ENCODE measurements at regions of chr1 and their contacts with region 1.

Region 1: DNA sequence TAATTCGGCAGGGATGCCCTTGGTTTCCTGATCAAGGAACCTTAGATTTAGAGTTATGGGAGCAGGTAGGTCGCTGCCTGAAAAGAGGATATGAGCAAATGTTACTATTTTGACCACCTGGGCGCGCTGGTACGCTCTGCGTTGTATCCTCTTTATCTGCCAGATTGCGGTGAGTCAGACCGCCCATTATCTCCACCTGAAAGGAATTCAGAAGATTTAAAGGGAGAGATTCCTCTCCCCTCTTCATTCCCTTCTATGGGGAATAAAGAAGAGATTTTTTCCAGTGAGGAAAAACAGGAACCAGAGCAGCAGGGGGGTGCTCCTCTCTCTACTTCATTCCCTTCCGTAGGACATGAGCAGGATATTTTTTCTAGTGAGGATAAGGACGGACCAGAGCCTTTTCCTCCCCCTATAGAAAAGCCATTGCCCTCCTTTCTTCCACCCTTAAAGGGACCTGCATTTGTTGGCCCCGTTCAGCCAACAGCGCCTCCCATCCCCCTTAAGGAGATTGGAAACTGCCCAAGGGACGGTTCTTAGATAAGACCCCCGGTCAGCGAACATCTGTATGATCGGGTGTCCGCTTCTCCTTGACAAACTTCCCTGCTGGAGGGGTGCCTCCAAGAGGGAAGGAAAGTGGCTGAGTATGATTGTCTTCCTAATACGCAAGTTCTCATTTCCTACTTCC is 34.1 kb downstream of the CLCA1 start:
- DNase-seq: peak; percentile 30
- H3K27ac ChIP-seq: no peak overlapping the region
- CTCF ChIP-seq: no peak

Region 2: DNA sequence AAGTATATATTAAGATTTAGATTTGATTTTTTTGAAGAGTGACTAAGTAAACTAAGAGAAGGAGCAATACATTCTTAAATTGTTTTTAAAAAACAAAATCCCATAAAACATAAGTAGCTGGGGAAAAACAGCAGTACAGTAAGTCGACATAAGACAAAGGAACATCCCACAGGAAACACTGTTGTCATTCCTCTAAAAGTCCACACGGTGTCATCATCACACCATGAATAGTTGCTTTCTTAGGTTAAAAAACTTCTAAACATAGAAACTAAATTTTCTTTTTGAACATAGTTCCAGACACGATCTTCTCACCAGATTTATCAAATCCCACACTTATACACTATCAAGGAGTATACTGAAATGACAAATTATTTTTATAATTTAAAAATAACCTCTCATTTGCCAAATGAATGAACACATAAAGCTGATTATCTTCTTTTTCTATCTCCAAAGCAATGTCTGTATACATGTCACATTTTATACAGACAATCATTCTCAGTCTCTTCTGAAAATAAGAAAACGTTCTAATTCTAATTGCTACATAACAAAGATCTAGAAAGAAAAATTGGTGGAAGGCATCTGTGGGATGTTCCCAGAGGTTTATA is 122.5 kb before region 1 on chr1:
- CTCF ChIA-PET with region 1: interaction called, 14 read pairs
- POLR2A ChIA-PET with region 1: no interaction called
- DNase-seq: peak; percentile 57
- H3K27ac ChIP-seq: no peak overlapping the region
- CTCF ChIP-seq: peak; percentile 76

Region 3: DNA sequence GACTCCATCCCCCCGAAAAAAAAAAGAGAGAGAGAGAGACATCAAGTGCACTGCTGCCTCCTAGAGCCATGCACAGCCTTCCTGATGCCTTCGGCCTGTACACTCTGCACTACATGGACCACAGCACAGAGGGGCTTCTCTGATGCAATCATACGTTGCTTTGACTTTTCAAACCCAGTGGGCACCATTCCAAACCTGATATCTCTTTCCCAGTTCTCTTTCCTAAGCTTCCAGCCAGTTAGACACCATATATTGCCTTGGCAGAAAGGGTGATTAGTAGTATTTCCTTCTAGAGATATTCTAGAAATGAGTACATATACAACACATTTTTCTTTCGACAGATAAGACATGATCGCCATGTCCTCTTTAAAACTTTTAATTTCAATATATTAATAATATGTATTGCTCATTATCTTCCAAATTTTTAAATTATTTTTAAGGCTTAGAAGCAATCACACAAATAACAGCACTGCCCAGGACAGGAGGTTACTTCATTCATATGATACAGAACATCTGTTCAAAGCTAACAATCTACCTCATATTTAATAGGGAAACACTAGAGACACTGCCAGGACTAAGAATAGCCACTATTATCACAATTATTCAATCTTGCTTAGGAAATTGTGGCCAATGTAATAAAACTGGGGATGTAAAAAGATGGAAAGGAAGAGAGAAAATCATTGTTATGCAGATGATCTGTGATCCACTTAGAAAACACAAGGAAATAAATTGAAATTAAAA is 24.3 kb before region 1 on chr1:
- CTCF ChIA-PET with region 1: no interaction called
- POLR2A ChIA-PET with region 1: no interaction called
- DNase-seq: no peak
- H3K27ac ChIP-seq: no peak overlapping the region
- CTCF ChIP-seq: no peak

Region 4: GRCh38 chr1:86522240-86522639 is 19.4 kb after region 1 on chr1:
- CTCF ChIA-PET with region 1: no interaction called
- POLR2A ChIA-PET with region 1: no interaction called
- DNase-seq: no peak
- H3K27ac ChIP-seq: no peak overlapping the region
- CTCF ChIP-seq: no peak

Measured in RWPE1 (cell line).